Posterior vena cava (tissue), 2 donors: ENCODE measurements at regions of chr2 and their contacts with region 1.

Region 1: DNA sequence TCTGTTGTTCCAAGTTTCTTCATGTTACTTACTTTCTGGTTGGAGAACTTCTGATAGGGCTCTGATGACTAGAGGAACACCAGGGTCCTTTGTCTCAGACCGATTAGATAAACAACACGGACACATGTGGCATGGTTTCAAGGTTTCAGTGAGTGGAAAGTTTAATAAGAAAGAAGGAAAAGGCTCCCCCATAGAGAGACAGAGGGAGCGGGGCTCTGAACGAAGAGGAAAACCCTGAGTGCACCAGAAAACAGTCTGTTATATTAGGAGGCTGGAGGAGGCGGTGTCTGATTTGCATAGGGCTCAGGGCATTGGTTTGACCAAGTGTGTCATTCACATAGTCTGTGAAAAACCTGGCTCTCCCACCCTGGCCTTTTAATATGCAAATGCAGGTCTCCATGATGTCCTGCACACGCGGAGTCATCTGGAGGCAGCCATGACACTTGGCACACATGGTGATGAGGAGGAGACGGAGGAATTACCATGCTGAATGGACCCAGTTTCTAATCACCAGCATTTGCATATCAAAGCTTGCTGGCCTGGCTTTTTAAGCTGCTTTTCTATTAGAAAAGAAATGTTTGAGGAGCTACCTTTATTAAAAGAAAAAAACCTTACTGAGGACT is 94.2 kb downstream of the PTPN4 start:
- DNase-seq: no peak

Region 2: DNA sequence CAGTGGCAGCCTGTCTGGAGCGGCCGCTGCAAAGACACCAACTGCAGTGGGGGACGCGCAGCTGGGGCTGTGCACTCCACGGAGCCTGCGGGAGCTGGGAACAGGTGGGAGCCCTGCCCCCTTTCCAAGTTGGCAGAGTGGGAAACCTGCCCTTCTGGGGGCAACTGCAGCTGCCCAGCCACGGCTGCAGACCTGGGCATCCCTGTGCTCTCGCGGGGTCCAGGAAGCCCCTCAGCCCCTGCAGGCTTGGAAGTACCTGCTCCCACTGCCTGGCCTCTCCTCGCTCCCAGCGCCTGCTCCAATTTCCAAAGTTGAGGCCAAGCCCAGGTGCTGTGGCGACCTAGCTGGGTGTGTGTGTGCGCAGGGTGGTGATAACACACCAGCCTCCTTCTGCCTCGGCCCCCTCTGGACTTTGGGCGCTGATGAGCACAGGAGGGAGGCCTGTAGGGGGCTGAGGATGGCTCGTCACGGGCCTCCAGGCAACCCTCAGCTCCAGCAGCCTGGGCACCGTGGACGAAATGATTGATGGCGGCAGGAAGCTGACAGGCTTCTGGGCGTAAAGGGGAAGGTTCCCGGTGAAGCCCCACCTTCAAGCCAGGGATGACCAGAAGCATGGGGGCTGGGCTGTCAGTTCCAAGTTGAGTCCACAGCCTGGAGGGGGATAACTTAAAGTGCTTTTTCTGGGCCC is 17.3 kb before region 1 on chr2:
- intact Hi-C with region 1: loop called in 1 of 2 experiments (anchors 1 kb)
- DNase-seq: no peak

Region 3: DNA sequence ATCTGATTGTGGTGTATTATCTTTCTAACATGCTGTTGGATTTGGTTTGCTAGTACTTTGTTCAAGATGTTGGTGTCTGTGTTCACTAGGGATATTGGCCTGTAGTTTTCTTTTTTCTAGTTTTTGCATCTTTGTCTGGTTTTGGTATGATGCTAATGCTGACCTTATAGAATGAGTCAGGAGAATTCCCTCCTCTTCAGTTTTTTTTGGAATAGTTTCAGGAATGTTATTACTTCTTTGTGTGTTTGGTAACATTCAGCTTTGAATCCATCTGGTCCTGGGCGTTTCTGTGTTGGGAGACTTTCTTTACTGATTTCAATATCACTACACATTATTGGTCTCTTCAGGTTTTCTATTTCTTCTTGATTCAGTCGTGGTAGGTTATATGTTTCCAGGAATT is 34.8 kb after region 1 on chr2:
- intact Hi-C with region 1: no loop called
- DNase-seq: no peak

Region 4: DNA sequence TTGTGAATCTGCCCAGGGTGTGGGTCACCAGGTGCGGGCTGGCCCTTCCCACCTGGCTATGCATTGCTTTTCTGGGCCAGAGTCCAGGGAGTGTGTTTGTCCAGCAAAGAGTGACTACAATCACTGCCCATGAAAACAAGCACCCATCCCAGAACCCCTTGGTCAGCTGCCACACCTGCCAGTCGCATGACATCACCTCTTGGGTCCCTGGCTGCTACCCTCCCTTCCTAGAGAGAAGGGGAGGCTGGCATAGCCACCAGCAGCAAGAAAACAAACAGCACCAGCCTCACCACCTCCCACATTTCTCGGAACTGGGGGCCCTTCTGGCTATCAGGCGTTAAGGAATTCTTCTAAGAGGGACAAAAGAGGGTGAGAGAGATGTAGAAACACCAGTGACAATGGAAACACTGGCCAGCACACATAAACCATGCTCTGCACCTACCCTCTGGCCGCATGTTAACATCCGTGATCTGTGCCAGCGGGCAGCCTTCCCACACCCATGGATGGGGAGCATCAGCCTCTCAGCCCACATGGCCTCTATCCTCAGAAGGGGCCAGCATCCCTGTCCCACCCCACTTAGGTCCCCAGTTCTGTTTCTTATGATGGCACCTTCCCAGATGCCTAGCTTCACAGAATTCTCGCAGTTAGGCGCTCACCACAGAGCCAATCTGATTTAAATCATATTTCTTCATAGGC is 772.1 kb after region 1 on chr2:
- intact Hi-C with region 1: no loop called
- DNase-seq: peak; percentile 42